ENCODE measurements at regions of chr1 and their contacts with region 1.

Region 1: GRCh38 chr1:191125950-191126349 is 648.3 kb upstream of the BRINP3 start:
- DNase-seq: no peak
- ATAC-seq: no peak
- H3K4me3 ChIP-seq: no peak overlapping the region
- H3K27ac ChIP-seq: no peak overlapping the region
- H3K4me1 ChIP-seq: no peaks in the 10 kb centered on the region
- H3K27me3 ChIP-seq: no peaks in the 10 kb centered on the region
- CTCF ChIP-seq: no peak

Region 2: DNA sequence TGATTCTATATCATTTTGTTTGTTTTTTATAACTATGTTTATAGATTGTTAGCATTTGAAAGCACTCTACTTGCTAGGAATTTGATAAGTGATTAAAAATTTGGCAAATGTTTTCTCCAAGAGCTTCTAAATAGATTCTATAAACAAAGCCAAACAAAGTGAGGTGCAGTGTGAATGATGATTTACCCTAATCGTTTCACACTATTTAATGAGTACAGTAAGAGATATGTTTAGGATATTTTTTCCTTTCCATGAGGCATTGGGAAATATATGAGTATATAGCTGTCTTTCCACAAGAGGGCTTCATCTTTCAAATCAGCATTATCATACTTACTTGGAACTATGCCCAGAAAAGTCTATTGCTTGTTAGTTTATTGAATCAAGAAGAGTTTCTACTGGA is 371.3 kb before region 1 on chr1:
- CTCF ChIA-PET with region 1: no interaction called
- POLR2A ChIA-PET with region 1: no interaction called
- intact Hi-C with region 1: loop called (anchors 10 kb)
- DNase-seq: peak; percentile 87
- ATAC-seq: peak; percentile 67
- H3K4me3 ChIP-seq: no peak overlapping the region
- H3K27ac ChIP-seq: no peak overlapping the region
- H3K4me1 ChIP-seq: no peaks in the 10 kb centered on the region
- H3K27me3 ChIP-seq: peaks cover 11% of the 10 kb centered on the region
- CTCF ChIP-seq: peak; percentile 69

Region 3: GRCh38 chr1:190847166-190847565 is 278.8 kb before region 1 on chr1:
- CTCF ChIA-PET with region 1: interaction called, 12 read pairs
- POLR2A ChIA-PET with region 1: no interaction called
- intact Hi-C with region 1: no loop called
- DNase-seq: no peak
- ATAC-seq: no peak
- H3K4me3 ChIP-seq: no peak overlapping the region
- H3K27ac ChIP-seq: no peak overlapping the region
- H3K4me1 ChIP-seq: no peaks in the 10 kb centered on the region
- H3K27me3 ChIP-seq: peaks cover 32% of the 10 kb centered on the region
- CTCF ChIP-seq: no peak

Region 4: GRCh38 chr1:190957570-190957969 is 168.4 kb before region 1 on chr1:
- CTCF ChIA-PET with region 1: no interaction called
- POLR2A ChIA-PET with region 1: no interaction called
- intact Hi-C with region 1: loop called (anchors 10 kb)
- DNase-seq: peak; percentile 30
- ATAC-seq: peak; percentile 70
- H3K4me3 ChIP-seq: no peak overlapping the region
- H3K27ac ChIP-seq: no peak overlapping the region
- H3K4me1 ChIP-seq: no peaks in the 10 kb centered on the region
- H3K27me3 ChIP-seq: no peaks in the 10 kb centered on the region
- CTCF ChIP-seq: peak; percentile 51

Region 5: GRCh38 chr1:191151321-191151807 is 25.4 kb after region 1 on chr1:
- CTCF ChIA-PET with region 1: no interaction called
- POLR2A ChIA-PET with region 1: no interaction called
- intact Hi-C with region 1: no loop called
- DNase-seq: no peak
- ATAC-seq: no peak
- H3K4me3 ChIP-seq: no peak overlapping the region
- H3K27ac ChIP-seq: no peak overlapping the region
- H3K4me1 ChIP-seq: no peaks in the 10 kb centered on the region
- H3K27me3 ChIP-seq: no peaks in the 10 kb centered on the region
- CTCF ChIP-seq: no peak

Region 6: DNA sequence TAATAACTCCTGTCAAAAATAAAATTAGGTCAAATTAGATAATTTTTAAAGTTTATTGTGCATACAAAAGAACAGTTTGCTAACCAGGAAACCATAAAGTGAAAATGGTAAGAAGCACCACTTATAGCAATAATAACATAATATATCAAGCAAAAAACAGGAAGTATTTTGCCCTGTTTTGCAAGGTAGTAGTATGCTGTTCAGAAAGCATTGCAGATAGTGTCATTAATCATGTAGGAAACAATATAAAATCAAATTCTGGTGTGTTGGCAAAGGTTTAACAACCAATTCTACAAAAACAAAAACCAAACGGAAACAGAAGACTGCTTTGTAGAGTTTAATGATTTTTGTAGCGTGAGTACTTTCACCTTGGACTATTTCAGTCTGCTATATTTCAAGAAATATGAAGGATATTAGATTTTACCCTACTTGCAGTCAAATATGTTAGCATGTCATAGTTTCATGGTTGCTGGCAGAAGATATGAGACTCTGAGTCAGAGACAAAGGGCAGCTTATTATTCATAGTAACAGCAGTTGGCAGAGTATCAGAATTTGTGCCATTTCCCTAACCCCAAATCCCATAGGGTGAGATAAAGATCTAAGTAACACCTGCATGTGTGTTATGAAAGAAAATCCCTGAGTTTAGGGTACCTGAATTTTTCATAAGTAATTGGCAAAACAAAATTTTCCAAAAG is 80.7 kb after region 1 on chr1:
- CTCF ChIA-PET with region 1: no interaction called
- POLR2A ChIA-PET with region 1: no interaction called
- intact Hi-C with region 1: no loop called
- DNase-seq: peak; percentile 40
- ATAC-seq: peak; percentile 33; the same call in 1 of the 2 replicates
- H3K4me3 ChIP-seq: no peak overlapping the region
- H3K27ac ChIP-seq: no peak overlapping the region
- H3K4me1 ChIP-seq: no peaks in the 10 kb centered on the region
- H3K27me3 ChIP-seq: no peaks in the 10 kb centered on the region
- CTCF ChIP-seq: no peak

Measured in PC-3 (cell line).